ENCODE measurements at regions of chr17 and their contacts with region 1.

Region 1: DNA sequence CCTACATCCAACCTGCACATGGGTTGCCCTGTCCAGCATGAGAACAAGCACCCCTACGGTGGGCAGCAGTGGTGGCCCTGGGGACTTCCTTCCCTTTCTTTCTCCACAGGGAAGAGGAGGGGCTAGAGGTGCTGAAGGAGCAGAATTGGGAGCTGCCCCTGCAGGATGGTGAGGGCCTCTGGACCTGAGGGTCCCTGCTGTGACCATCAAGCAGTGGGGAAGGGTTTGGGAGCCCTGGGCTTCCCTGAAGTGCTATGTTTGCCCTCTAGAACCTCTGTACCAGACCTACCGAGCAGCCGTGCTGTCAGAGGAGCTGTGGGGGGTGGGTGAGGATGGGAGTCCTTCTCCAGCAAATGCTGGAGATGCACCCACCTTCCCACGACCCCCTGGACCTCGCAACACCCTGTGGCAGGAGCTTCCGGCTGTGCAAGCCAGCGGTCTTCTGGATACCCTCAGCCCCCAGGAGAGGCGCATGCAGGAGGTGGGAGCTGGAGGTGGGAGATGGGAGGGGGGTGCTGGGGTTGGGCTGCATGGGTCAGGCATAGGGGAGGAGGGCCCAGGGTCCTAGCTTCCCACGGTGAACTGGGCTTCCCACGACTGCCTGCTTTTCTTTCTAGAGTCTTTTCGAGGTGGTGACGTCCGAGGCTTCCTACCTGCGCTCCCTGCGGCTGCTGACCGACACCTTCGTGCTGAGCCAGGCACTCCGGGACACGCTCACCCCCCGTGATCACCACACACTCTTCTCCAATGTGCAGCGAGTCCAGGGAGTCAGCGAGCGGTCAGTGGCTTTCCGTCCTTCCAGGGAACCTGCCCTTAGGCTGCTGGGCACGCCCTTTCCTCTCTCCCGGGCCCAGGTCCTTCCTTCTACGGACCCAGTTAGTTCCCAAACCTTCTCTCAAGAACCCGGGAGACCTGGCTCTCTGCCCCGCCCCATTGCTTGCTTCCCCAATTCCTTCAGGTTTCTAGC is 5.0 kb downstream of the ARHGEF15 start:
- DNase-seq: no peak
- H3K4me3 ChIP-seq: no peak overlapping the region
- CTCF ChIP-seq: no peak

Region 2: DNA sequence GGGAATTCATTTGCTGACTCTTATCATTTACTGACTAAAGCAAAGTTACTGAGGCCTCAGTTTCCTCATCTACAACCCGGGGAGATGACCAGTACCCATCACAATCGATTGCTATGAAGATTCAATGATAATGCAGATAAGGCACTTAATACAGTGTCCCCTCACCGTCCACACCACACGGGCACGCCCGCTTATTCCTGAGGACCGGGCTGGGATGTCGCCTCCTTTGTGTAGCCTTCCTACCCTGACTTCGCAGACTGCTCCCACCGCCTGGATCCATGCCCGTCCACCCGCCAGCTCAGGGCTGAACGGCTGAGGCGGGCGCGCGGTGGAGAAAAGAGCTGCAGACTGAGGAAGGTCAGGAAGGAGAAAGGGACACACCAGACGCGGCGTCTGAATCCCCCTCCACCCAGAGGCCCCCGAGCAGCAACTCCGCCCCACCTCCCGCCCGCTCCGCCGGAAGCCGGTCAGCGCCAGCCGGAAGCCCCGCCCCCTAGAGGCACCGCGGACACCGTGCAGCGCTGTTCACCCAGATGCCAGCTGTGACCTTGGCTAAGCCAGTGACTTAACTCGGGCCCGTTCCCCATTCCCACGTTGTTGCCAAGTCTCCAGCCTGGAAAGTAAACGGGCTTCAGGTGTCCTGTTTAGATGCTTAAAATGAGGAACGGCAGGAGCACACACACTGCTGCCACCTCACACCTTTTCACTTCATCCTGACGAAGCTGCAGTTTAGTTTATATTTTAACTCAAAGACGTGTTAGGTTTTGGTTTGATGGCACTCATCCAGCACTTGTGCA is 61.4 kb after region 1 on chr17 and contains the start of gene KRABD2:
- in situ Hi-C with region 1: loop called (anchors 5 kb)
- DNase-seq: no peak
- H3K4me3 ChIP-seq: peak within 1 kb of the TSS; percentile 87
- CTCF ChIP-seq: peak; percentile 69